ENCODE measurements at regions of chr22 and their contacts with region 1.

Region 1: GRCh38 chr22:39520054-39520891 is at the start of gene ATF4:
- DNase-seq: peak; percentile 99
- ATAC-seq: peak; percentile 95
- H3K4me3 ChIP-seq: peak within 1 kb of the TSS; percentile 92 to 93
- H3K27ac ChIP-seq: peak within 1 kb of the TSS; percentile 97 to 98
- H3K4me1 ChIP-seq: no peaks in the 10 kb centered on the region
- H3K27me3 ChIP-seq: no peaks in the 10 kb centered on the region
- total RNA-seq, gene ATF4: 305 to 381 TPM

Region 2: GRCh38 chr22:39319270-39320022 is 200.8 kb before region 1 on chr22 and contains the start of gene RPL3:
- intact Hi-C with region 1: loop called in 1 of 2 experiments (anchors 10 kb)
- DNase-seq: peak; percentile 97 to 99
- ATAC-seq: peak; percentile 97
- H3K4me3 ChIP-seq: peak within 1 kb of the TSS; percentile 50 to 89
- H3K27ac ChIP-seq: peak within 1 kb of the TSS; percentile 57 to 94
- H3K4me1 ChIP-seq: no peaks in the 10 kb centered on the region
- H3K27me3 ChIP-seq: no peaks in the 10 kb centered on the region
- total RNA-seq, gene RPL3: 1,469 to 1,615 TPM

Region 3: GRCh38 chr22:39395936-39396796 is 124.1 kb before region 1 on chr22:
- intact Hi-C with region 1: loop called (anchors 5 kb)
- DNase-seq: peak in 1 of 2 donors; percentile 67
- ATAC-seq: no peak
- H3K4me3 ChIP-seq: no peak overlapping the region
- H3K27ac ChIP-seq: no peak overlapping the region
- H3K4me1 ChIP-seq: no peaks in the 10 kb centered on the region
- H3K27me3 ChIP-seq: no peaks in the 10 kb centered on the region

Region 4: GRCh38 chr22:39405346-39406085 is 114.8 kb before region 1 on chr22:
- intact Hi-C with region 1: loop called in 1 of 2 experiments (anchors 5 kb)
- DNase-seq: peak; percentile 71 to 85
- ATAC-seq: peak; percentile 60
- H3K4me3 ChIP-seq: peak overlapping the region in 1 of 2 donors; percentile 17
- H3K27ac ChIP-seq: peak overlapping the region in 1 of 2 donors; percentile 6
- H3K4me1 ChIP-seq: no peaks in the 10 kb centered on the region
- H3K27me3 ChIP-seq: no peaks in the 10 kb centered on the region

Region 5: GRCh38 chr22:39431821-39432251 is 88.4 kb before region 1 on chr22:
- intact Hi-C with region 1: loop called in 1 of 2 experiments (anchors 5 kb)
- DNase-seq: peak; percentile 82 to 87
- ATAC-seq: peak; percentile 76
- H3K4me3 ChIP-seq: no peak overlapping the region
- H3K27ac ChIP-seq: peak overlapping the region; percentile 64 to 75
- H3K4me1 ChIP-seq: peaks cover 0 to 5% of the 10 kb centered on the region in 2 donors
- H3K27me3 ChIP-seq: no peaks in the 10 kb centered on the region

Region 6: DNA sequence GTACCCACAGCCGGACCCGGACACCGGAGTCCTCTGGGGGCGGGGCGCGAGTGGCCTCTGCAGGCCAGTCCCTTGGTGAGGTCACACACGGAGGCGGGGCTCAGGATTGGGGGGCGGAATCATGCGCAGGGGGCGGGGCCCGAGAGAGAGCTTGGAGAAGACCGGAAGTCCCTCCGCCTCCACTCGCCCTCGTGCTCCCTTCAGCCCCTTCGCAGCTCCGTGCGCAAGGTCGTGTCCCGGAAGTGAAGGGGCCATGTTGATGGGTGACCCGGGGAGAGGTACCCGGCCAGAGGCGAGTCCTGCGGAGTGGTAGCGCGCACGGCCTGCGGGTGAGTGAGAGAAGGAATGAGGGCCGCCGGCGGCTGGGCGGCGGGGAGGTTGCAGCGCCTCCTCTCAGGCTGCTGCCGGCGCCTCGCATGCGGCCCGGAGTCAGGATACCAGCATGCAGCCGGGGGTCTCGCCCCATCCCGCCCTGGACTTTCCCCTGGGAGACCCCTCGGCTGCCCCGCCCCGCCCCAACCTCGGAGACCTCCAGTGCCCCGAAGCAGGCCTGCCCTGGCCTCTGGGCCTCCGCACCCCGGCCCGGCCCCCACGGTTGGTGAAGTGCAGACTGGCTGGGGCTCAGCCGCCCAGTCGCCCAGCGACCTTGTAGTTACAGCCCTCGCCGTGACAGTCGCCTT is 18.0 kb before region 1 on chr22 and contains the start of gene MIEF1:
- intact Hi-C with region 1: loop called in 1 of 2 experiments (anchors 2 kb)
- DNase-seq: peak; percentile 99 to 100
- ATAC-seq: peak; percentile 98
- H3K4me3 ChIP-seq: peak within 1 kb of the TSS; percentile 86 to 96
- H3K27ac ChIP-seq: peak within 1 kb of the TSS in 1 of 2 donors; percentile 34
- H3K4me1 ChIP-seq: peaks cover 2 to 11% of the 10 kb centered on the region in 2 donors
- H3K27me3 ChIP-seq: no peaks in the 10 kb centered on the region
- total RNA-seq, gene MIEF1: 15.5 to 20.1 TPM

Measured in aorta (tissue), 5 donors.